Activated CD4-positive, alpha-beta T cell treated with anti-CD3 and anti-CD28 coated beads, Interleukin-2, amount 10 ng/mL, durations not matched to agents 24 days and 14 days (primary cell): ENCODE measurements at regions of chr14 and their contacts with region 1.

Region 1: DNA sequence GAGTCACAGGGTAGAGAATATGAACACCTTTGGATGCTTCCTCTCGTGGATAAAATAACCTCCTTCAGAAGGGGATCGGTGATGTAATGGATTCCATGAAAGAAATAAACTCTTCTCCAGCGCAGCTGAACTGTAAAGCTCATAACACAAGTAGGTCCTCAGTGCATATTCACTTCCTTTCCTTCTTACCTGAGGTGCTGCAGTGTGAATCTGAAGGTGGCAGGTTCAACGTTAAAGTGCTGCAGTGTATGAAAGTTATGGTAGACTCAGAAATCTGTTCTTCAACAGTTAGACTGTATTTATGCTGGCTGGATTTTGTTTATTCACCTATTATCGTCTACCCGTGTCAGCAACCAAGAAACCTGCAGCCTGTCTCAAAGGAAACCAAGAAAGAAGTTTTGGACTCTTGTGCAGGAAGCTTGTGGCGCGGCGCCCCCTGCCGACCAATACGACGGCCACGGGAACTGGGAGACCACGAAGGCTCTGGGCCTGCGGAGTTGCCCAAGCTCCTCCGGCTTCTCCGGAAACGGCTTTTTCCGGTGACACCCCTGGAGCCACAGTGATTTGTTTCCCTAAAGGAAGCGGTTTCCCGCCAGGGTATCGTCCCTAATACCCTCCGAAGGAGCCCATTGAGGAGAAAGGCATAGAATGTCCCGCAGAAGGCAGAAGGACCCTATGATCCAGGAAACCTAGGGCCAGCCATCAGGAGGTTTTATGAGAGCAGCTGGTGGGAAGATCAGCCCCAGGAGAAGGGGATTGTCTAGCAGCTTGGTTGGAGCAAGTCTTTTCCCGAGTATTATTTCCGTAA is 17.6 kb upstream of the RNASE3 start:
- DNase-seq: peak; percentile 93
- H3K4me3 Mint-ChIP-seq: peak overlapping the region; percentile 53
- H3K27ac Mint-ChIP-seq: no peak overlapping the region
- H3K4me1 Mint-ChIP-seq: peaks cover 10% of the 10 kb centered on the region
- H3K27me3 Mint-ChIP-seq: peaks cover 28% of the 10 kb centered on the region

Region 2: DNA sequence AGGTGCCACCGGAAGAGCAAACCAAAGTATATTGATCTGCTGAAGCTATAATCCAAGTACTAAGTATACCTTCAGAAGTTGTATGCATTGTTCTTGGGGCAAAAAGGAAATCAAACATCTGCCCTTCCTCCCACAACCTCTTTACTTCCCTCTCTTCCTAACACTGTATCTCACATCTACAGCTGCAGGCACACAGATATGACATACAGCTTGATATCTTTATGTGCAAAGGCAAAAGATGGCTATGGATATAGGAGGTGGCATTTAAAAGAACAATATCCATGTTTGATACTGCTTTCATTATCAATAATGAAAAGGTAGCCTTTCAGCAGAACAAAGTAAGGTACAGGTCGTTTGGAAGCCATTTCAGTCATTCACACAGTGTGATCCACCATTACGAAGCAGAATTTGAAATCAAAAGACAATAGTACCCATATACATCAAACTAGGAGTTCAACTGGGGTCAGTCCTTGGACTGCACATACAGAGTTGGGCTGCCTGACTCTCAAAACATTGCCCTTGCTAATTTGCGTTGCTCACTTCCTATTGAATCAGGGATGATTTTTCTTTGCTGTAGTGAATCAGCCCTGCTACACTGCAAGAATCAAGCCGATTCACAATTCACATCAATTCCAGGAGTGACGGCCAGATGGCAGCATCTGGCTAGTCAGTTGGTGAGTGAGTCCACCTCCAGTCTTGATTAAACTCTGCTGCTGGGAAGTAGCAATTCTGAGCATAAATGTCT is 176.1 kb before region 1 on chr14:
- intact Hi-C with region 1: loop called (anchors 1 kb)
- DNase-seq: peak; percentile 90
- H3K4me3 Mint-ChIP-seq: no peak overlapping the region
- H3K27ac Mint-ChIP-seq: no peak overlapping the region
- H3K4me1 Mint-ChIP-seq: peaks cover 4% of the 10 kb centered on the region
- H3K27me3 Mint-ChIP-seq: peaks cover 7% of the 10 kb centered on the region